Posterior cingulate gyrus (tissue), 11 donors: ENCODE measurements at regions of chr4 and their contacts with region 1.

Region 1: GRCh38 chr4:145481164-145481941 is at the start of gene SMAD1:
- DNase-seq: peak; percentile 74 to 97 (median 84)

Region 2: GRCh38 chr4:145180298-145181090 is 300.9 kb before region 1 on chr4 and contains the start of gene OTUD4:
- intact Hi-C with region 1: loop called (anchors 5 kb)
- DNase-seq: peak; percentile 89 to 99 (median 95)

Region 3: DNA sequence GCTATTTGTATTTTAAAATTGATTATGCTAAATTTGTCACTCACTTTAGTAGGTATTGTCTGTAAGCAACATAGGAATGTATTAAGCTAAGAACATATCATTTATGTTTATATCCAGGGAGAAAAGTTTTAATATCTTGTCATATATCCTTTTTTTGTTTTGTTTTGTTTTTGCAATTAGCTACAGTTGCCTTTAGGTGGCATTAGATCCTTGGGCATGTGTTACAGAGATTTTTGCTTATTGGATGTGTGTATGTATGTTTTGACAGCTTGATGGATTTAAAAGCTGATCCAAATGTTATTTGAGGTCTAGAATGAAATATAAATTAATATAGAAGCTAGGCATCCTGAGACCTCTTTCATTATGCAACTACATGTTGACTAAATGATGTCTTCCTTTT is 264.8 kb before region 1 on chr4:
- intact Hi-C with region 1: no loop called
- DNase-seq: no peak

Region 4: GRCh38 chr4:145446184-145446583 is 35.2 kb before region 1 on chr4:
- intact Hi-C with region 1: no loop called
- DNase-seq: no peak

Region 5: DNA sequence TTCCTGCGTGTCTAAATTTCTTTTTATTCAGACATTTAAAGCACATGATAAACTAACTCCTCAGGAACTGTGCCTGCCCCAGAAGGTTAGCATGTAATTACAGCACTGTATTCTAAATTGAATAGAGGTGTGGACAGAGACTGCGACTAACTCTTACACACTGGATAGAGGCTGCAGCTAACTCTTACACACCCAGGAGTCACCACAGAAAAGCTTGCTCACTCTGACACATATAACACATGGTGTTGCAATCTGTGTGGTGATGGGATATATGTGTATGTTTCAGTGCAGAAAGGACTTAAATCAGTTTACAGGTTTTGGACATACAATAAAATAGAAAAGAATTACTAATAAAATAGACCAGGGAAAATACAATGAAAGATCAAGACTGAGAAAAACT is 41.8 kb after region 1 on chr4:
- intact Hi-C with region 1: loop called (anchors 5 kb)
- DNase-seq: no peak

Region 6: GRCh38 chr4:145609481-145610427 is 128.4 kb after region 1 on chr4:
- intact Hi-C with region 1: loop called (anchors 5 kb)
- DNase-seq: peak in 7 of 10 donors; percentile 19 to 91 (median 65)